Heart right ventricle (tissue), 16 donors: ENCODE measurements at regions of chr10 and their contacts with region 1.

Region 1: GRCh38 chr10:101782811-101783735 is at the start of gene NPM3:
- DNase-seq: peak; percentile 78 to 85
- ATAC-seq: peak; percentile 65 to 79 (median 74)
- H3K4me3 ChIP-seq: peak within 1 kb of the TSS; percentile 19 to 82 (median 71)
- H3K27ac ChIP-seq: peak within 1 kb of the TSS in 8 of 10 donors; percentile 35 to 75 (median 50)
- H3K4me1 ChIP-seq: peaks cover 11 to 66% (median 44%) of the 10 kb centered on the region in 9 donors
- H3K27me3 ChIP-seq: peaks cover 0 to 23% (median 9%) of the 10 kb centered on the region in 7 donors
- CTCF ChIP-seq: no peak
- total RNA-seq, gene NPM3: 4.9 to 12.1 (median 7.0) TPM

Region 2: GRCh38 chr10:101602761-101603398 is 180.2 kb before region 1 on chr10:
- intact Hi-C with region 1: loop called (anchors 2 to 10 kb)
- DNase-seq: peak; percentile 19 to 75
- ATAC-seq: peak; percentile 73 to 90 (median 84)
- H3K4me3 ChIP-seq: no peak overlapping the region
- H3K27ac ChIP-seq: no peak overlapping the region
- H3K4me1 ChIP-seq: peaks cover 0 to 16% (median 5%) of the 10 kb centered on the region in 9 donors
- H3K27me3 ChIP-seq: no peaks in the 10 kb centered on the region
- CTCF ChIP-seq: peak; percentile 69 to 89 (median 85)

Region 3: DNA sequence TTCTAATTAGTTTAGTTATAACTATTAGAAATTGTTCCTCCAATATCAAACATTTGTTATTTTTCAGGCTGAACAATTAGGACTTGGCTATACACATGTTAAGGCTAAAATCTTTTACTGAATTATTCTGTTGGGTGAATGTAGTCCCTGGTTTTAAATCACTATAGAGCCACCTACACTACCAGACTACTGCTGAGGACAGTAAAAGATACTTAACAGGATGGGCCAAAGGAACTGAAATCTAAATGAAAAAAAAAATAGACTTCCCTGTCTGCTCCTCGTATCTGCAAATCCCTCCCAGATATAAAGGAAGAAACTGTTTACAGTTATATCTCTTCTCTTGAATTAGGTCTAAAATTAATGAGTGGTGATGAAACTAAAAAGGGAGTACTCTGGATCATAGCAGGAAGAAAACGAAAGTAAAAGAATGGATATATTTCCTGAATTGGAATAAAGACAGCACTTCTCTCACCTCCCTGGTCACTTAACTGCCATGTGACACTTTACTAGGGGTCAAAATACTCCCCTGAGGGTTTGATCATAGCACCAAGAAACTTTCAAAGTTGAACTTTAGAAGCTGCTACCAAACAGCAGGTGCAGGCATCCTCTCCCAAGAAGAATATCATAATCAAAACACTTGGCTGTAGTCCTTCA is 100.8 kb before region 1 on chr10:
- intact Hi-C with region 1: loop called in 1 of 10 experiments (anchors 10 kb)
- DNase-seq: no peak
- ATAC-seq: peak in 1 of 8 donors; percentile 44
- H3K4me3 ChIP-seq: no peak overlapping the region
- H3K27ac ChIP-seq: peak overlapping the region in 3 of 10 donors; percentile 0 to 15 (median 15)
- H3K4me1 ChIP-seq: peaks cover 0 to 44% (median 28%) of the 10 kb centered on the region in 9 donors
- H3K27me3 ChIP-seq: no peaks in the 10 kb centered on the region
- CTCF ChIP-seq: no peak

Region 4: GRCh38 chr10:101818119-101818871 is 35.2 kb after region 1 on chr10 and contains the start of gene OGA:
- intact Hi-C with region 1: loop called in 1 of 10 experiments (anchors 5 kb)
- DNase-seq: peak; percentile 97
- ATAC-seq: peak; percentile 92 to 96 (median 95)
- H3K4me3 ChIP-seq: peak within 1 kb of the TSS; percentile 82 to 100 (median 96)
- H3K27ac ChIP-seq: peak within 1 kb of the TSS; percentile 92 to 98 (median 96)
- H3K4me1 ChIP-seq: peaks cover 3 to 45% (median 35%) of the 10 kb centered on the region in 9 donors
- H3K27me3 ChIP-seq: no peaks in the 10 kb centered on the region
- CTCF ChIP-seq: no peak
- total RNA-seq, gene OGA: 65.6 to 146 (median 119) TPM

Region 5: DNA sequence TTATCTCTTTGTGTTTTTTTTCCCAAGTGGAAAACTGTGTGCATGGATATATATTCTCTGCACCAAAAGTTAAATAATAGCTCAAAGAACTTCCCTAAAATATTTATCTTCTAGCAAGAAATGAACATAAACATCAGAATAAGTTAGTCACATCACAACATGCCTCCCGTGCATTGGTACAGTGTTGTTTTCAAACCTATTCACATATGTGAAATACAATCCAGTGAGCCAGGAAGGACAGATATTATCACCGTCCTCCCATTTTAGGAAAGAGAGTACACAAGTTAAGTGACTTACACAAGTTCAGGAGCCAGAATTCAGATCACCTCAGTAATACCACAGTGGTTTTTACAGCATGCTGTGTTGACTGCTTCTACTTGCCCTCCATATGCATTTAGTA is 250.7 kb after region 1 on chr10:
- intact Hi-C with region 1: no loop called
- DNase-seq: no peak
- ATAC-seq: no peak
- H3K4me3 ChIP-seq: no peak overlapping the region
- H3K27ac ChIP-seq: no peak overlapping the region
- H3K4me1 ChIP-seq: no peaks in the 10 kb centered on the region
- H3K27me3 ChIP-seq: no peaks in the 10 kb centered on the region
- CTCF ChIP-seq: no peak